Sciatic nerve (tissue), 2 donors: ENCODE measurements at regions of chr11 and their contacts with region 1.

Region 1: DNA sequence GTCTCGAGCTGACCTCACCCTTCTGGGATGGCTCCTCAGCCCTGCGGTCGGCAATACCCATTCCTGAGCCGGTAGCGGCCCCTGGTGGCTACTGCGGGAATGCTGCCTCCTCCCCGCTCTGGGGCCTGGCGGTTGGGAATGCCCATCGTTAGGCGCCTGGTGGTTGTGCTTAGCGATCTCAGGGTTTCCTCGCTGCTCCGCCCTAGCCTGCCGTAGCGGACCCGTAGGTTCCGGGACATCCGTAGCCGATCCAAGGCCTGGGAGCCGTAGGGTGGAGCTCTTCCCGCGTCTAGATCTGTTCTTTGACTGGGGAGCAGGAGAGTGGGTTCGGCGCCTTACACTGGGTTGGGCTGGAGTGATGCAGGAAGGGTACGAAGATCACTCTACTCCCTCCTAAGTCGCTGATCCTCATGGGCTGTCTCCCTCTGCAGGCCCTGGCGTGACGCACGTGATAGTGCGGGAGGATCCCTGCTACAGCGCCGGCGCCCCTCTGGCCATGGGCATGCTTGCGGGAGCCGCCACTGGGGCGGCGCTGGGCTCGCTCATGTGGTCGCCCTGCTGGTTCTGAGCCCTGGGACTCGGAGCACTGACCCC is 14.8 kb downstream of the PLEKHB1 start:
- DNase-seq: peak; percentile 97
- ATAC-seq: peak; percentile 97

Region 2: GRCh38 chr11:73404048-73404447 is 257.1 kb before region 1 on chr11:
- intact Hi-C with region 1: loop called (anchors 10 kb)
- DNase-seq: peak; percentile 84
- ATAC-seq: peak; percentile 89

Region 3: GRCh38 chr11:73625696-73626318 is 35.3 kb before region 1 on chr11:
- intact Hi-C with region 1: loop called (anchors 5 kb)
- DNase-seq: peak; percentile 84
- ATAC-seq: peak; percentile 92